GM12878 (cell line): ENCODE measurements at regions of chr14 and their contacts with region 1.

Region 1: DNA sequence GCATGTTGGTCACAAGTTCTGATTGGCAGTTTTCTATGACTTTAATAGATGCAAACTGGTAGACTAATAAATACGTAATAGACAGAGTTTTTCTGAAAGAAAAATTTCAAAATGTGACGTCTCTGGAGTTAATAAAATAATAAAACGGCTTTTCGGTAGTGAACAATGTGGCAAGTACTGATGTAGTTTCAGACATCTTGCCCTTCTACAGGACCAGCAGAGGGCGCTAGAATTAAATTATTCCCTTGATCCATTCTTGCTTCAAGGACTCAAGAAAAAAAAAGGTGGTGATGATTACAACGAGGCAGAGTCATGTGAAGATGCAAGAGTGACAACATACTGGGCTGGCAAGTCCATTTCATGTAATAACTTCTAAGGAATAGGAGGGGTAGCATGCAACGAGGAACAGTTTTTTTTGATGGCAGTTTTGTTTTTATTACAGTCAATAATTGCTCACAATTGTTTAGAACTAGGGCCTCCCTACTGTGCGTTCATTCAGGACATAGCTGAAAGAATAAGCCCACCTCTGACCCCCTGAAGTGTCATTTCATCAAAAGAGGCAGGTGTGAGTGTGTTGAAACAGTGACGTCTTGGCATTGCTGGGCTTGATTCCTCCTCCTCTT is 101.0 kb upstream of the GZMB start:
- DNase-seq: no peak
- ATAC-seq: peak; percentile 93
- H3K4me3 ChIP-seq: no peak overlapping the region
- H3K27ac ChIP-seq: no peak overlapping the region
- H3K4me1 ChIP-seq: no peaks in the 10 kb centered on the region
- H3K27me3 ChIP-seq: no peaks in the 10 kb centered on the region
- CTCF ChIP-seq: peak; percentile 58 to 68 (median 67)
- EP300 ChIP-seq: no peak
- POLR2A ChIP-seq: no peak
- RAD21 ChIP-seq: peak; percentile 53

Region 2: GRCh38 chr14:24690492-24690891 is 44.5 kb before region 1 on chr14:
- CTCF ChIA-PET with region 1: interaction called, 13 read pairs
- POLR2A ChIA-PET with region 1: no interaction called
- RAD21 ChIA-PET with region 1: interaction called, 9 read pairs
- SMC1A ChIA-PET with region 1: interaction called, 4 read pairs
- in situ Hi-C with region 1: no loop called
- intact Hi-C with region 1: loop called (anchors 2 kb)
- DNase-seq: no peak
- ATAC-seq: peak; percentile 67
- H3K4me3 ChIP-seq: no peak overlapping the region
- H3K27ac ChIP-seq: no peak overlapping the region
- H3K4me1 ChIP-seq: peaks cover 18% of the 10 kb centered on the region
- H3K27me3 ChIP-seq: no peaks in the 10 kb centered on the region
- CTCF ChIP-seq: peak; percentile 30 to 37 (median 36); a peak in 5 of 6 replicates
- EP300 ChIP-seq: no peak
- POLR2A ChIP-seq: no peak
- RAD21 ChIP-seq: peak; percentile 58

Region 3: DNA sequence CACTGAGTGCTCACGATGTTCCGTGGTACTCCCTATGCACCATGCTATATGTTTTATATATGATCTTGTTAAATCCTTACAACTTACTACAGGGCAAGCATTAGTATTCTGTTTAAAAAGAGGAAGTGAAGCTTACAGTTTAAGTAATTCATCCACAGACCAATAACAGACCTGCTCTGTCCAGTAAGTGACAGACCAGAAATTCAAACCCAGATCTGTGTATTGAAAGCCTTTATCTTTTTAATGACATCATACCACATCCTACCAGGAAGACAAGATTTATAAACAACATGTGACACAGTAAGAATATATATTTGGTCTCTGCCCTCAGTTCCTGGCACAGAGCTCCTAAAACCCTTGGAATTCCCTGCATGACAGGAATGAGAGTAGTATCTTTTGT is 108.5 kb after region 1 on chr14:
- CTCF ChIA-PET with region 1: no interaction called
- POLR2A ChIA-PET with region 1: no interaction called
- RAD21 ChIA-PET with region 1: no interaction called
- SMC1A ChIA-PET with region 1: no interaction called
- in situ Hi-C with region 1: no loop called
- intact Hi-C with region 1: no loop called
- DNase-seq: peak; percentile 13
- ATAC-seq: peak; percentile 97
- H3K4me3 ChIP-seq: no peak overlapping the region
- H3K27ac ChIP-seq: no peak overlapping the region
- H3K4me1 ChIP-seq: no peaks in the 10 kb centered on the region
- H3K27me3 ChIP-seq: no peaks in the 10 kb centered on the region
- CTCF ChIP-seq: no peak
- EP300 ChIP-seq: peak; percentile 10 to 50; a peak in 2 of 4 replicates
- POLR2A ChIP-seq: no peak
- RAD21 ChIP-seq: no peak

Region 4: GRCh38 chr14:24891987-24892496 is 157.1 kb after region 1 on chr14:
- CTCF ChIA-PET with region 1: no interaction called
- POLR2A ChIA-PET with region 1: no interaction called
- RAD21 ChIA-PET with region 1: no interaction called
- SMC1A ChIA-PET with region 1: no interaction called
- in situ Hi-C with region 1: no loop called
- intact Hi-C with region 1: no loop called
- DNase-seq: no peak
- ATAC-seq: no peak
- H3K4me3 ChIP-seq: no peak overlapping the region
- H3K27ac ChIP-seq: no peak overlapping the region
- H3K4me1 ChIP-seq: no peaks in the 10 kb centered on the region
- H3K27me3 ChIP-seq: no peaks in the 10 kb centered on the region
- CTCF ChIP-seq: no peak
- EP300 ChIP-seq: no peak
- POLR2A ChIP-seq: no peak
- RAD21 ChIP-seq: no peak

Region 5: DNA sequence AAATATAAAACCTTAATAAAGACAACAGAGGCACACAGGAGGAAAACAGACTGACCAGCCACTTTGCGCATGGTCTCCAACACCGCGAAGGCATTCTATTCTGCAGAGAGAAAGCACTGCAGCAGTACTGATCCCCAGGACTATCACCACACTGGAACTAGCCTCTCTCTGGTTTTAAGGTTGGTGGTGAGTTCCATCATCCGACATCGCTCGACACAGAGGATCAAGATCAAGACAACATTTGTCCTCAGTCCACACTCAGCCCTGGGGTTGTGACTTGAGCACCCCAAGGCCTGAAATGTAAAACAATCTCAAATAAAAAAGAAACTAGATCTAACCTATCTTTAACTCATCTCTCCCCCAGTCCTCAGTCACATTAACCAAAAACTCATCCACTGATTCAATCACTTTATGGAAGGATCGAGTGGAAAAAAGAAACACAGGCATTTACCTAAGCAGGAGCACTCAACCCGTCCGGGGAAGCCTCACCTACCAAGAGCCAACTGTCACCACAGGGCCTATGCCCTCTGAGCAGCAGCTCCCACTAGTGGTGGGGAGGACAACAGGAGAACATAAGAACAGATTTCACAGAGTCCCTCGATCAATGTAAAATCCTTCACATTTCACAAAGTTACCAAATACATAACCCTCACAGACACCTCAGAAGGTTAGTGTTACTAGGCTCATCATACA is 297.2 kb after region 1 on chr14:
- CTCF ChIA-PET with region 1: interaction called, 13 read pairs
- POLR2A ChIA-PET with region 1: no interaction called
- RAD21 ChIA-PET with region 1: no interaction called
- SMC1A ChIA-PET with region 1: interaction called, 5 read pairs
- in situ Hi-C with region 1: no loop called
- intact Hi-C with region 1: loop called (anchors 10 kb)
- DNase-seq: no peak
- ATAC-seq: peak; percentile 93
- H3K4me3 ChIP-seq: no peak overlapping the region
- H3K27ac ChIP-seq: no peak overlapping the region
- H3K4me1 ChIP-seq: no peaks in the 10 kb centered on the region
- H3K27me3 ChIP-seq: no peaks in the 10 kb centered on the region
- CTCF ChIP-seq: peak; percentile 51 to 80 (median 66)
- EP300 ChIP-seq: no peak; a peak in 1 of 4 replicates
- POLR2A ChIP-seq: no peak
- RAD21 ChIP-seq: no peak

Region 6: GRCh38 chr14:25150934-25151790 is 416.2 kb after region 1 on chr14:
- CTCF ChIA-PET with region 1: interaction called, 26 read pairs
- POLR2A ChIA-PET with region 1: no interaction called
- RAD21 ChIA-PET with region 1: interaction called, 6 read pairs
- SMC1A ChIA-PET with region 1: interaction called, 6 read pairs
- in situ Hi-C with region 1: no loop called
- intact Hi-C with region 1: loop called (anchors 1 kb)
- DNase-seq: peak; percentile 1
- ATAC-seq: peak; percentile 64
- H3K4me3 ChIP-seq: no peak overlapping the region
- H3K27ac ChIP-seq: no peak overlapping the region
- H3K4me1 ChIP-seq: no peaks in the 10 kb centered on the region
- H3K27me3 ChIP-seq: no peaks in the 10 kb centered on the region
- CTCF ChIP-seq: peak; percentile 63 to 76 (median 67)
- EP300 ChIP-seq: no peak
- POLR2A ChIP-seq: no peak
- RAD21 ChIP-seq: peak; percentile 58

Region 7: DNA sequence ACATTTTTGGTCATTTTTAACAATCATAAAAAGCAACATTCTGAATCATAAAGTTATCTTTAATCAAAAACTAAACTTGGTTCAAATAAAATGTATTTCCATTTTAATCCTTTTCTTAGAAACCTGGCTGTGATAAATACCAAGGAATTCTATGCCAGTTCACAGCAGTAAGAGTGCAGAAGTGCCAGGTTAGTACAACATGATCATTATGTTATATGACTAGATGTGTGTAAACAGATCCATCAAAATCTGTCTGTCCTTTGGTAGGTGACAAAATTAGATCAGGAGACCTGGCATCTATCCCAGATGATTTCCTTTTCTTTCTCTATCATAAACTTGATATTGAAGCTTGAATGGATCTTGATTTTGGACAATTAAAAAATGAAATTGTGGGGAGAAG is 515.5 kb after region 1 on chr14:
- CTCF ChIA-PET with region 1: no interaction called
- POLR2A ChIA-PET with region 1: no interaction called
- RAD21 ChIA-PET with region 1: no interaction called
- SMC1A ChIA-PET with region 1: no interaction called
- in situ Hi-C with region 1: no loop called
- intact Hi-C with region 1: loop called (anchors 10 kb)
- DNase-seq: no peak
- ATAC-seq: no peak
- H3K4me3 ChIP-seq: no peak overlapping the region
- H3K27ac ChIP-seq: no peak overlapping the region
- H3K4me1 ChIP-seq: no peaks in the 10 kb centered on the region
- H3K27me3 ChIP-seq: no peaks in the 10 kb centered on the region
- CTCF ChIP-seq: no peak
- EP300 ChIP-seq: no peak
- POLR2A ChIP-seq: no peak
- RAD21 ChIP-seq: no peak

Region 8: DNA sequence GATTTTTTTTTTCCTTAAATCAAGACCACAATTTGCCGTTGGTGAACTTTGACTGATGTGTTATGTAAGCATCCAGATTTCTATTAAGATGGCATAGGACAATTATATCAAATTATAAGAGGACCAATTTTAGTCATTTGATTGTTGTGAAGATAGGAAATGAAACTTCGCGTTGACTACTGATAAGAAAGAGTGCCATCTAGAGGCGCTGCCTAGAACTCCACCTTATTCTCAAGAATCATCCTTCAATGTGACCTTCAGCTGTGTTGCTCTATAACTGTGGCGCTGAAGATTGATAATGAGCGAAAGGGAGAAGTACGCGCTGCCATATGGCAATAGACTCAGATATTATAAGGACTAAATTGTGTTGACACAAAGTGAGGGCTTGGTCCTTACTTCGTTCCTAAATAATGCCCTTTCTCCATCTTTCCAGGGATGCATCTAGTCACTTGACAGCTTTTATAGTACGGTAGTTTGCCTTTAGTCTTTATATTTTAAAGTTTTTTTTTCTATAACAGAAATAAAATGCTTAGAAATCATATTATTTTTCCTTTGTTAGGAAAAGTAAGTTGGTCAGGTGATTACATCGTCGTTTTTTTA is 665.7 kb after region 1 on chr14:
- CTCF ChIA-PET with region 1: interaction called, 4 read pairs
- POLR2A ChIA-PET with region 1: no interaction called
- RAD21 ChIA-PET with region 1: no interaction called
- SMC1A ChIA-PET with region 1: no interaction called
- in situ Hi-C with region 1: loop called (anchors 25 kb)
- intact Hi-C with region 1: no loop called
- DNase-seq: no peak
- ATAC-seq: peak; percentile 79
- H3K4me3 ChIP-seq: no peak overlapping the region
- H3K27ac ChIP-seq: no peak overlapping the region
- H3K4me1 ChIP-seq: no peaks in the 10 kb centered on the region
- H3K27me3 ChIP-seq: no peaks in the 10 kb centered on the region
- CTCF ChIP-seq: peak; percentile 57 to 66 (median 65)
- EP300 ChIP-seq: no peak
- POLR2A ChIP-seq: no peak
- RAD21 ChIP-seq: peak; percentile 38